ENCODE measurements at regions of chr17 and their contacts with region 1.

Region 1: GRCh38 chr17:81238817-81239600 is at the starts of genes NDUFAF8 and TEPSIN:
- DNase-seq: peak; percentile 97
- H3K4me3 ChIP-seq: peak within 1 kb of the TSS; percentile 84 to 100 (median 98)
- H3K27ac ChIP-seq: peak within 1 kb of the TSS; percentile 83 to 95 (median 90)
- H3K4me1 ChIP-seq: peaks cover 15 to 30% (median 25%) of the 10 kb centered on the region in 4 donors
- H3K27me3 ChIP-seq: no peaks in the 10 kb centered on the region
- CTCF ChIP-seq: no peak
- EP300 ChIP-seq: no peak
- POLR2A ChIP-seq: peak; percentile 73
- total RNA-seq, gene NDUFAF8: 22.3 to 35.4 (median 29.9) TPM in 3 of 4 donors, not detected in the other
- total RNA-seq, gene TEPSIN: 61.2 to 336 (median 121) TPM

Region 2: GRCh38 chr17:80991645-80992076 is 247.3 kb before region 1 on chr17 and contains the start of gene CHMP6:
- in situ Hi-C with region 1: no loop called
- intact Hi-C with region 1: loop called (anchors 5 kb)
- DNase-seq: peak; percentile 76
- H3K4me3 ChIP-seq: peak within 1 kb of the TSS; percentile 75 to 100 (median 99)
- H3K27ac ChIP-seq: peak within 1 kb of the TSS; percentile 61 to 92 (median 90)
- H3K4me1 ChIP-seq: peaks cover 13 to 43% (median 30%) of the 10 kb centered on the region in 4 donors
- H3K27me3 ChIP-seq: no peaks in the 10 kb centered on the region
- CTCF ChIP-seq: peak in 1 of 5 experiments; percentile 35
- EP300 ChIP-seq: no peak
- POLR2A ChIP-seq: no peak
- total RNA-seq, gene CHMP6: 38.6 to 107 (median 41.7) TPM

Region 3: GRCh38 chr17:81119223-81120148 is 119.5 kb before region 1 on chr17:
- in situ Hi-C with region 1: no loop called
- intact Hi-C with region 1: no loop called
- DNase-seq: peak; percentile 71
- H3K4me3 ChIP-seq: peak overlapping the region in 2 of 4 donors; percentile 21 to 26
- H3K27ac ChIP-seq: no peak overlapping the region
- H3K4me1 ChIP-seq: peaks cover 0 to 9% (median 4%) of the 10 kb centered on the region in 4 donors
- H3K27me3 ChIP-seq: peaks cover 4% of the 10 kb centered on the region
- CTCF ChIP-seq: no peak
- EP300 ChIP-seq: no peak
- POLR2A ChIP-seq: no peak

Region 4: GRCh38 chr17:81142301-81143199 is 96.5 kb before region 1 on chr17:
- in situ Hi-C with region 1: no loop called
- intact Hi-C with region 1: loop called (anchors 5 kb)
- DNase-seq: peak; percentile 81
- H3K4me3 ChIP-seq: no peak overlapping the region
- H3K27ac ChIP-seq: no peak overlapping the region
- H3K4me1 ChIP-seq: peaks cover 0 to 9% (median 5%) of the 10 kb centered on the region in 4 donors
- H3K27me3 ChIP-seq: no peaks in the 10 kb centered on the region
- CTCF ChIP-seq: peak; percentile 49 to 73 (median 66)
- EP300 ChIP-seq: no peak
- POLR2A ChIP-seq: no peak

Region 5: DNA sequence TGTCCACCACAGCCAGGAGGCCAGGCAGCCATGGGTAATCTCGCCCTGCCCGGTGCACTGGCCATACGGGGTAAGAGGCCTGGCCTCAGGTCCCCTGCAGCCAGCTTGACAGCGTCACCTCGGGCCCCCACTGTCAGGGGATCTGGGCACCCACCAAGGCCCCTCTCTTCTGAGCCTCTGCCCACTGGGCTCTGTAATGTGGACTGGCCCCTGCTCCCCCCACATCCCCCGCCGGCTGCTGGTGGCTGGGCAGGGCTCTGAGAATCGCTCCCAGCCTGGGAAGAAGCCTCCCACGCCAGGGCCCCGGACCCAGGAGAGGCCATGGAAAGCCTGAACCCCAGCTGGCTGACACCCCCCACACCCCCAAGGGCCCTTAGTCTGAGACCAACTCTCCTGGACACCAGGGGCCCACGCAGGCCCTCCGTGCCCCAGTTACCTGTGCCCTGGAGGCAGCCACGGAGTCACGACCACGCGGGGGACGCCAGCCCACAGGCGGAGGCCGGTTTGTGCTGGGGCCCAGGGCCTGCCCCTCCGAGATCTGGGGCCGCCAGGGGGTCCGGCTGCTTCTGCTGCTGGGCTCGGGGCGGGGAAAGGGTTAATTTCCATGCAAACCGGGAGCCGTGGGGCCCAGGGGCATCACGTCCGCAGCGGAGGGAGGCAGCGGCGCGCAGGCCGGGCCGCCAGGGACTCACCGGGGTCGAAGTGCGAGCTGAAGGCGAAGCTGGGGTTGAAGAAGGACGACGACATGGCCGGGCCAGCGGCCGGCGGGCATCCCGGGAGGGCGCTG is 73.6 kb before region 1 on chr17 and contains the start of gene PVALEF:
- in situ Hi-C with region 1: no loop called
- intact Hi-C with region 1: no loop called
- DNase-seq: no peak
- H3K4me3 ChIP-seq: peak within 1 kb of the TSS in 3 of 4 donors; percentile 8 to 41 (median 23)
- H3K27ac ChIP-seq: no peak within 1 kb of the TSS
- H3K4me1 ChIP-seq: peaks cover 3 to 10% (median 4%) of the 10 kb centered on the region in 4 donors
- H3K27me3 ChIP-seq: peaks cover 47% of the 10 kb centered on the region
- CTCF ChIP-seq: no peak
- EP300 ChIP-seq: no peak
- POLR2A ChIP-seq: no peak
- total RNA-seq, gene PVALEF: not detected

Region 6: DNA sequence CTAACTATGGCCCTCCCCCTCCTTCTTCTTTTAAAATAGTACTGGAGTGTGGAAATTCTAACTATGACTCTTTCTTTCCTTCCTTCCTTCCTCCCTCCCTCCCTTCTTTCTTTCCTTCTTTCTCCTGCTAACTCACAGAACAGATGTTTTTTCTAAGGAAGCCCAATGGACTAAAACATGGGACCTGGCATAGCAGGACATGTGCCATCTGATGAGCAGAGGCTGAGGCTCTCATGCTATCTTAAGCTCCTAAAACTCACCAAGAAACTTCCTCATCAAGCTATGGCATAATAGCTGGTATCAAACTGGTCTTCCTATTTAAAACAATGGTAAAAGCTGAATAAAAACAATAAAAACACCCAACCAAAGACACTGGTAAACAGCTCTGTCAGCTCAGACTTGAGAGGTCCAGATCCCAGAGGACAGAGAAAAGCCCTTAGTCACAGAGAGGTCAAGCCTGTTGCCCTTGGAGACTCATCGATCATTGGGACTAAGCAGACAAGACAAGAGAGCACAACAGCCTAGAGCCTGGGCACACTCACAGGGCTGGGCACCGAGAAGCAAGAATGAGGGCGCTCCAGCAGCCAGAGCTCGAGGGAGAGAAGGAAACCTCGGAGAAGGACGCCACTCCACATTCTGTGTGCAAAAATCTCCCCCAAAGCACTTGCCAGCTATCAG is 28.5 kb after region 1 on chr17:
- in situ Hi-C with region 1: no loop called
- intact Hi-C with region 1: no loop called
- DNase-seq: no peak
- H3K4me3 ChIP-seq: no peak overlapping the region
- H3K27ac ChIP-seq: no peak overlapping the region
- H3K4me1 ChIP-seq: no peaks in the 10 kb centered on the region
- H3K27me3 ChIP-seq: no peaks in the 10 kb centered on the region
- CTCF ChIP-seq: no peak
- EP300 ChIP-seq: no peak
- POLR2A ChIP-seq: no peak

Region 7: GRCh38 chr17:81294856-81295680 is 56.1 kb after region 1 on chr17 and contains the start of gene SLC38A10:
- in situ Hi-C with region 1: no loop called
- intact Hi-C with region 1: loop called (anchors 10 kb)
- DNase-seq: peak; percentile 95
- H3K4me3 ChIP-seq: peak within 1 kb of the TSS; percentile 78 to 95 (median 86)
- H3K27ac ChIP-seq: peak within 1 kb of the TSS; percentile 93 to 98 (median 94)
- H3K4me1 ChIP-seq: peaks cover 8 to 42% (median 35%) of the 10 kb centered on the region in 4 donors
- H3K27me3 ChIP-seq: no peaks in the 10 kb centered on the region
- CTCF ChIP-seq: no peak
- EP300 ChIP-seq: no peak
- POLR2A ChIP-seq: peak; percentile 98
- total RNA-seq, gene SLC38A10: 94.9 to 113 (median 98.9) TPM

Region 8: GRCh38 chr17:81522491-81523474 is 283.8 kb after region 1 on chr17:
- in situ Hi-C with region 1: no loop called
- intact Hi-C with region 1: no loop called
- DNase-seq: no peak
- H3K4me3 ChIP-seq: no peak overlapping the region
- H3K27ac ChIP-seq: no peak overlapping the region
- H3K4me1 ChIP-seq: peaks cover 23 to 35% (median 26%) of the 10 kb centered on the region in 4 donors
- H3K27me3 ChIP-seq: peaks cover 52% of the 10 kb centered on the region
- CTCF ChIP-seq: no peak
- EP300 ChIP-seq: no peak
- POLR2A ChIP-seq: no peak

Measured in transverse colon (tissue), 4 donors.